ENCODE measurements at regions of chr13 and their contacts with region 1.

Region 1: DNA sequence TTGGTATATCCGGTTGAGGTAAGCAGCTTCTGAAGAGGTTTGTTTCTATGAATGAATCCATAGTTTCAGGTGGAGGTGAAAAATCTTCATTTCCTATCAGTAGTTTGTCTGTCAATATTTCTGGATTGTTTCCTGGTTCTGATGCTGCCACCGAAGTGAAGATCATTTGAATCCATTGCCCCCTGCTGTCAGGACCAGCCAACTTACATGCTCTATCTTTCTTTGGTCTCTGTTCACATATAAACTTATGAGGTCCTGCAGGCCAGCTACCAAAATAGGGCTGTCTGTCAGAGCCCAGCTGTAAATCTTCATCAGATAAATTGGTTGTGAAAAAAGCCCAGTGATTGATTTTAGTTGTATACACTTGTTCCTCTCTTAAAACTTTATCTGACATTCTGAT is 15.2 kb upstream of the N4BP2L1 start:
- DNase-seq: peak; percentile 57
- ATAC-seq: peak; percentile 53
- H3K4me3 Mint-ChIP-seq: no peak overlapping the region
- H3K27ac Mint-ChIP-seq: no peak overlapping the region
- H3K4me1 Mint-ChIP-seq: peaks cover 12% of the 10 kb centered on the region
- H3K27me3 Mint-ChIP-seq: no peaks in the 10 kb centered on the region

Region 2: GRCh38 chr13:32246468-32246867 is 196.6 kb before region 1 on chr13:
- CTCF ChIA-PET with region 1: interaction called, 3 read pairs
- POLR2A ChIA-PET with region 1: no interaction called
- intact Hi-C with region 1: loop called in 1 of 2 experiments (anchors 1 kb)
- DNase-seq: peak; percentile 67
- ATAC-seq: peak; percentile 86
- H3K4me3 Mint-ChIP-seq: no peak overlapping the region
- H3K27ac Mint-ChIP-seq: no peak overlapping the region
- H3K4me1 Mint-ChIP-seq: no peaks in the 10 kb centered on the region
- H3K27me3 Mint-ChIP-seq: no peaks in the 10 kb centered on the region

Region 3: DNA sequence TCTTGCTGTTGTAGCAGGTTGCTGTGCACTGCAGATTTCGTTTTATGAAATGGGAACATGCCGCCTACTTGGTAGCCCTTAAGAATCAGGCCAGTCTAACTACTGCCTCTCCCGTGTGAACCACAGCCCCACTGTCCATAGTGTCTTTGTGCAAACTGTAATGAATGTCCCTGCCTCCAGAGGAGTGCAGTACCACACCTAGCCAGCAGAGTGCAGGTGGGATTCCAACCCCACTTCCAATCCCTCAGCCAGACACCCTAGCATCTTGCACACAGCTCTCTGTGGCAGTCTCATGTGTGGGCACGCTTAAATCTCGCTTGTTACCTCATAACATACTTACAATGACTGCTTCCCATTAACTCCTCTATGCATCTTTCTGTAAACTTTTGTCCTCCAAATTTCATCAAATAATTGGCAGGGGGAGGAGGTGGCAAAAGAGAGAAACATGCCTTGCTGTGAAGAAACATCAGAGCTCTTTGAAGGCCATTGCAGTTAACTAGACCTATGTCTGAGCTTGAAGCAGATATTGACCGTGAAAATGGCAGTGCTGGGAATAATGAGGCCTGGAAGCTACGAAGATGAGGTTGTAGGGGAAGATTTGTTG is 175.2 kb before region 1 on chr13:
- CTCF ChIA-PET with region 1: no interaction called
- POLR2A ChIA-PET with region 1: no interaction called
- intact Hi-C with region 1: loop called (anchors 5 kb)
- DNase-seq: peak; percentile 76
- ATAC-seq: peak; percentile 63
- H3K4me3 Mint-ChIP-seq: no peak overlapping the region
- H3K27ac Mint-ChIP-seq: no peak overlapping the region
- H3K4me1 Mint-ChIP-seq: peaks cover 9% of the 10 kb centered on the region
- H3K27me3 Mint-ChIP-seq: no peaks in the 10 kb centered on the region

Region 4: GRCh38 chr13:32381539-32381938 is 61.6 kb before region 1 on chr13:
- CTCF ChIA-PET with region 1: interaction called, 3 read pairs
- POLR2A ChIA-PET with region 1: no interaction called
- intact Hi-C with region 1: loop called in 1 of 2 experiments (anchors 5 kb)
- DNase-seq: no peak
- ATAC-seq: peak; percentile 30
- H3K4me3 Mint-ChIP-seq: no peak overlapping the region
- H3K27ac Mint-ChIP-seq: no peak overlapping the region
- H3K4me1 Mint-ChIP-seq: no peaks in the 10 kb centered on the region
- H3K27me3 Mint-ChIP-seq: no peaks in the 10 kb centered on the region

Region 5: GRCh38 chr13:32474999-32475792 is 32.1 kb after region 1 on chr13:
- CTCF ChIA-PET with region 1: no interaction called
- POLR2A ChIA-PET with region 1: no interaction called
- intact Hi-C with region 1: no loop called
- DNase-seq: no peak
- ATAC-seq: no peak
- H3K4me3 Mint-ChIP-seq: no peak overlapping the region
- H3K27ac Mint-ChIP-seq: no peak overlapping the region
- H3K4me1 Mint-ChIP-seq: peaks cover 8% of the 10 kb centered on the region
- H3K27me3 Mint-ChIP-seq: no peaks in the 10 kb centered on the region